ENCODE measurements at regions of chr9 and their contacts with region 1.

Region 1: DNA sequence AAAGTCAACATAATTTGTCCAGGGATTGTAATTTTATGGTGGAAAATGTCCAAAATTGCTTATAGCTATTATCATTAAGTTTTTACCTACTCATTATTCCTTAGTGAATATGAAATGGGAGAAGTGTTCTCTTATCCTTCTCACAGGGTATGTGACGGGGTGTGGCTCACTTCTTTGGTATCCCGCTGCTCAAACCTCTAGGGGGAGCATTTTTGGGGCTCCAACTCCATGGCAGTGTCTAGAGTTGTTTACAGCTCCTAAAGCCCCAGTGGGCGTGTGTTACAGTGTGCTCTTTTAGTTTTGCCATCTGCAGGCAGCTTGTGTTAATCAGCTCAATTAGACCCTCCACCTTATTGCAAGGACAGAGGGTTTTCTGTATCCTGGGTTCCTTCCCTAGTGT is 89.4 kb downstream of the CDKN2A start:
- DNase-seq: no peak
- H3K4me3 ChIP-seq: no peak overlapping the region
- CTCF ChIP-seq: no peak
- POLR2A ChIP-seq: no peak

Region 2: GRCh38 chr9:21943464-21943863 is 38.7 kb after region 1 on chr9:
- intact Hi-C with region 1: loop called (anchors 2 kb)
- DNase-seq: no peak
- H3K4me3 ChIP-seq: no peak overlapping the region
- CTCF ChIP-seq: no peak
- POLR2A ChIP-seq: no peak

Region 3: DNA sequence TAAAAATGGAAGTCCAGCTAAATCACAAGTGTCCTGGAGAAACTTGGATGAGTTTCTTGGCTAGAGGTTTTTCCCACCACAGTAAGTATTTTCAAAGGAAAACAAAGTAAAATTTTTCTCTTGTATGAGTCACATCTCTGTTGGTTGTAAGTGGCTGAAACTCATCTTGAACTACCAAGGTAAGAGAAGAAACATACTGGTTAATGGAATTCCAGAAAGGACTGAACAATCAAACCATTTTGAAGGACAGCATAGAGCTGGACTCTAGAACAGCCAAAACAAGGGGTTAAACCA is 207.1 kb after region 1 on chr9:
- intact Hi-C with region 1: no loop called
- DNase-seq: no peak
- H3K4me3 ChIP-seq: no peak overlapping the region
- CTCF ChIP-seq: no peak
- POLR2A ChIP-seq: no peak

Measured in lower leg skin (tissue), 4 donors.